ENCODE measurements at regions of chr11 and their contacts with region 1.

Region 1: GRCh38 chr11:86041975-86042378 is 26.9 kb downstream of the PICALM start:
- DNase-seq: peak; percentile 55
- CTCF ChIP-seq: peak; percentile 80

Region 2: DNA sequence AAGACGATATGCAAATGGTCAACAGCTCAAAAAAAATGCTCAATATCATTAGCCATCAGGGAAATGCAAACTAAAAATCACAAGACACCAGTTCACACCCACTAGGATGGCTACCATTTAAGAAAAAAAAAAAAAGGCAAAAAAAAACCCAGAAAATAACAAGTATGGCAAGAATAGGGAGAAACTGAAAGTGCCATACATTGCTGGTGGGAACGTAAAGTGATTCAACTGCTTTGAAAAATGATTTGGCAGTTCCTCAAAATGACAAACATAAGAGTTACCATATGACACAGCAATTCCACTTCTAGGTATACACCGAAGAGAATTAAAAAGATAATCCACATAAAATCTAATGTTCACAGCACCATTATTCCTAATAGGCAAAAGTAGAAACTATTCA is 20.6 kb before region 1 on chr11:
- CTCF ChIA-PET with region 1: interaction called, 19 read pairs
- POLR2A ChIA-PET with region 1: interaction called, 3 read pairs
- DNase-seq: no peak
- CTCF ChIP-seq: no peak

Region 3: DNA sequence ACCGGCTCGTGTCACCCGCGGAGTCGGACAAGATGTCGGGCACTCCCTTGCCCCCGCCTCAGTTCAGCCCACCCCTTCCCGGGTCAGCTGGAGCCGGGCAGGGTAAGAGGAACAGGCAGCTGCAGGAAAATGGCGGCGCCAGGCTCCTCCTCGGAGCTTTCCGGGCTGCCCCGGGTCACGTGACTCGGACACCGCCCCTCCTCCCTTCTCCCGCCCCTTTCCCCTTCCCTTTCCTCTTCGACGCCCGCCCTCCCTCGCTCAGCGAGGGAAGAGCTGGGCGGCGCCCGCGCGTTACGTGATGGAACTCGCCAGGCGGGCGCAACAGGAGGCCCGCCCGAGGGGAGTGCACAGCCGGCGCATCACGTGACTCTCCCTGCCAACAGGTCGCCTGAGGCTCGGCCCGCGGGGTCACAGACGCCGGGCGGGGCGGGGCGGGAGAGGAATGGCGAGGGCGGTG is 27.0 kb after region 1 on chr11 and contains the start of gene PICALM:
- CTCF ChIA-PET with region 1: interaction called, 22 read pairs
- POLR2A ChIA-PET with region 1: no interaction called
- DNase-seq: peak; percentile 96
- CTCF ChIP-seq: no peak

Region 4: DNA sequence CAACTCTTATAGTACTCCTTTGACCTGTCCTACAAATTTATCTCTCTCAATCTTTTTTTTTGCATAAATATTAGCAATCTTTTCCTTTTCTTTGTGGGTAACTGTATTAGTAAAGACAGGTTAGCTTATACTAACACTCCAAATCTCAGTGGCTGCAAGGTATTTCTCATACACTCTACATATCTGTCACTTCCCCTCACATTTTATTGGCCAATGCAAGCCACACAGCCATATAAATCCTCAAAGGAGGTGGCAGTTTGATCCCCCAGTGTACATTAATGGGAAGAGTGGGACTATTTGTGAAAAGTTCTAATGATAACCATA is 160.0 kb after region 1 on chr11:
- CTCF ChIA-PET with region 1: interaction called, 13 read pairs
- POLR2A ChIA-PET with region 1: no interaction called
- DNase-seq: no peak
- CTCF ChIP-seq: no peak

Region 5: DNA sequence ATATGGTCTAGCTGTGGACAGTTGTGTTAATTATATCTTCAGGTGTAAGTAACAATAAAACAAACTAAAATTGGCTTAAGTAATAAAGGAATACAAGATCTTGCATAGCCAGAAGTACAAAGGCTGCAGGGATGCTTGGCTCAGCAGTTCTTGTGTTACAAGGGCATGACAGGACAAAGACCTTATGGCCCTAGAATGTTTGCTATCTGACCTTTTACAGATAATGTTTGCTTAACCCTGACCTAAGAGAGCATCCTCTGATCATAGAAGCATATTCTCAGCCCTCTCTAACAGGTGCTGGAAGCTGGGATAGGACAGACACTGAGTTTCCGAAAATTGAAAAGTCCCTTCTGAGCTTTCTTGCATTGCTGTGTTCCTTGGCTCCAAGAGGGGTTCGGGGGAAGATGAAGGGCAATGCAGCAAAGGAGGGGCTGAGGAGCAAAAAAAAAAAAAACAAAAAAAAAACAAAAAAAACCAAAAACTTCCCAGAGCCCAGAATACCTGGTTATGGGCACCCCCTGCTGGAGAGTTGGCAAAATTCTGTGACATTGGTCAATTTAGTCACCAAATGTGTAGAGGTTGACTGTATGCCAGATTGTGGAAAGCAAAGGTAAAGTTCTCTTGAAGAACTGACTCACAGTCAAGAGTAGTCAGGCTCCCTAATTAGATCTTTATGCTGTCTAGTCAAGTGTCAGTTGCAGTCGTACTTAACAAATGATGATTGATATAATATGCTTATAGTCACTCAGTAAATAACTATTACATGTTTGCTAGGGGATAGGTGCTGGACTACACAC is 249.7 kb after region 1 on chr11:
- CTCF ChIA-PET with region 1: interaction called, 63 read pairs
- POLR2A ChIA-PET with region 1: no interaction called
- DNase-seq: peak; percentile 50
- CTCF ChIP-seq: peak; percentile 51